Naive thymus-derived CD4-positive, alpha-beta T cell (primary cell): ENCODE measurements at regions of chr2 and their contacts with region 1.

Region 1: DNA sequence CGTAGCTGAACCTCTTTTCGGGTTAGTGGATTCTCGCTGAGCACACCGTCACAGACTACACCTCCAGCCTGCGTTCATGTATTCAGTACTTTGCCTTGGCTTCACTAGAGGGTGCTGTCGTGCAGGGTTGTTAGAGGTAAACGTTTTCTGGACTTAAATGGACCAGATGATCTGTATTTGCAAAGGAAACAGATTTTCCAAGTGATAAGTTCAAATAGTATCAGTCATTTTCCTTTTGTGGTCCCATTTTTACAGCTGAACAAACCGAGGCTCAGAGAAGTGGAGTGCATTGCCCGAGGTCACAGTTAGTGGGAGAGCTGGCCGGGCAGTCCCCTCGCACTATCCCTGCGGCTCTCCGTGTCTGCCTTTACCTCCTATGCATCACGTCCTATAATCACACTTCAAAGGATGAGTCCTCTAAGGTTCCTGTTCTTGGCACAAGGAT is 125.9 kb downstream of the MAP4K4 start:
- DNase-seq: peak; percentile 29 to 72 (median 64)
- ATAC-seq: peak; percentile 93
- H3K4me3 ChIP-seq: no peak overlapping the region
- H3K4me3 Mint-ChIP-seq: peak overlapping the region; percentile 27 to 74 (median 56)
- H3K27ac ChIP-seq: peak overlapping the region; percentile 43
- H3K27ac Mint-ChIP-seq: peak overlapping the region; percentile 70 to 95 (median 82)
- H3K4me1 ChIP-seq: peaks cover 15 to 45% of the 10 kb centered on the region in 2 donors
- H3K4me1 Mint-ChIP-seq: peaks cover 47 to 97% (median 82%) of the 10 kb centered on the region in 7 donors
- H3K27me3 ChIP-seq: no peaks in the 10 kb centered on the region
- H3K27me3 Mint-ChIP-seq: no peaks in the 10 kb centered on the region

Region 2: DNA sequence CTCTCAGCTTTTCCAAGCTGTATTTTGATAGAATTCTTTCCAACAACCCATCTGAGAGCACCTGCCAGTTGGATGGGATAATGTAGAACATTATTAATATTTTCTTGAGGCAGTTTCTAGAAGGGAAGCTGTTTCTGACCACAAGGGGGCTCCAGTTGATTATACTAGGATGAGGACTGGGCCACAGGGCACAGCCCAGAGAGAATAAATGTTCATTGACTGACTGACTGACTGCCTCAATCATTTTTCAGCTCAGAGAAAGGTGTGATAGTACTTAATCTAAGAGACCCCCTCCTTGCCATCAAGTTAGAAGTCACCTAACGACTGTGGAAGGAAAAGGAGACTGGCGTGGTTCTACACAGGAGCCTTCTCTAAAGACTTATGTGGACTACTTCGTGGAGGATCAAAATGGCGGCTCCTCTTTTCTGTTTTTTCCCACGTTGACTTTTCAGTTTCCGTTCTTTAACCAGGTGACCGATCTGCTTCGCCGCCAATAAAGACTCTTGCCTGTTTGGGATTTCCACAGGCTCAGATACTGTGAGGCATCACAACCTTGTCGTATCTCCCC is 404.2 kb before region 1 on chr2:
- CTCF ChIA-PET with region 1: interaction called, 84 read pairs
- POLR2A ChIA-PET with region 1: no interaction called
- intact Hi-C with region 1: loop called (anchors 1 to 2 kb)
- DNase-seq: peak in 8 of 9 donors; percentile 41 to 74 (median 68)
- ATAC-seq: peak; percentile 87
- H3K4me3 ChIP-seq: no peak overlapping the region
- H3K4me3 Mint-ChIP-seq: no peak overlapping the region
- H3K27ac ChIP-seq: no peak overlapping the region
- H3K27ac Mint-ChIP-seq: peak overlapping the region in 1 of 9 donors; percentile 64
- H3K4me1 ChIP-seq: no peaks in the 10 kb centered on the region
- H3K4me1 Mint-ChIP-seq: peaks cover 0 to 5% (median 0%) of the 10 kb centered on the region in 7 donors
- H3K27me3 ChIP-seq: no peaks in the 10 kb centered on the region
- H3K27me3 Mint-ChIP-seq: peaks cover 0 to 6% (median 0%) of the 10 kb centered on the region in 5 donors

Region 3: GRCh38 chr2:101655702-101656422 is 167.5 kb before region 1 on chr2:
- CTCF ChIA-PET with region 1: no interaction called
- POLR2A ChIA-PET with region 1: no interaction called
- intact Hi-C with region 1: loop called in 1 of 2 experiments (anchors 5 kb)
- DNase-seq: no peak
- ATAC-seq: no peak
- H3K4me3 ChIP-seq: no peak overlapping the region
- H3K4me3 Mint-ChIP-seq: no peak overlapping the region
- H3K27ac ChIP-seq: no peak overlapping the region
- H3K27ac Mint-ChIP-seq: no peak overlapping the region
- H3K4me1 ChIP-seq: peaks cover 5 to 10% of the 10 kb centered on the region in 2 donors
- H3K4me1 Mint-ChIP-seq: peaks cover 11 to 25% (median 16%) of the 10 kb centered on the region in 7 donors
- H3K27me3 ChIP-seq: no peaks in the 10 kb centered on the region
- H3K27me3 Mint-ChIP-seq: no peaks in the 10 kb centered on the region

Region 4: GRCh38 chr2:101717071-101717845 is 106.1 kb before region 1 on chr2:
- CTCF ChIA-PET with region 1: interaction called, 3 read pairs
- POLR2A ChIA-PET with region 1: interaction called, 3 read pairs
- intact Hi-C with region 1: loop called in 1 of 2 experiments (anchors 5 kb)
- DNase-seq: peak in 7 of 9 donors; percentile 58 to 74 (median 65)
- ATAC-seq: peak; percentile 72
- H3K4me3 ChIP-seq: peak overlapping the region; percentile 22
- H3K4me3 Mint-ChIP-seq: peak overlapping the region; percentile 39 to 83 (median 76)
- H3K27ac ChIP-seq: peak overlapping the region; percentile 64
- H3K27ac Mint-ChIP-seq: peak overlapping the region in 8 of 9 donors; percentile 76 to 98 (median 96)
- H3K4me1 ChIP-seq: peaks cover 53 to 74% of the 10 kb centered on the region in 2 donors
- H3K4me1 Mint-ChIP-seq: peaks cover 56 to 92% (median 83%) of the 10 kb centered on the region in 7 donors
- H3K27me3 ChIP-seq: no peaks in the 10 kb centered on the region
- H3K27me3 Mint-ChIP-seq: no peaks in the 10 kb centered on the region

Region 5: DNA sequence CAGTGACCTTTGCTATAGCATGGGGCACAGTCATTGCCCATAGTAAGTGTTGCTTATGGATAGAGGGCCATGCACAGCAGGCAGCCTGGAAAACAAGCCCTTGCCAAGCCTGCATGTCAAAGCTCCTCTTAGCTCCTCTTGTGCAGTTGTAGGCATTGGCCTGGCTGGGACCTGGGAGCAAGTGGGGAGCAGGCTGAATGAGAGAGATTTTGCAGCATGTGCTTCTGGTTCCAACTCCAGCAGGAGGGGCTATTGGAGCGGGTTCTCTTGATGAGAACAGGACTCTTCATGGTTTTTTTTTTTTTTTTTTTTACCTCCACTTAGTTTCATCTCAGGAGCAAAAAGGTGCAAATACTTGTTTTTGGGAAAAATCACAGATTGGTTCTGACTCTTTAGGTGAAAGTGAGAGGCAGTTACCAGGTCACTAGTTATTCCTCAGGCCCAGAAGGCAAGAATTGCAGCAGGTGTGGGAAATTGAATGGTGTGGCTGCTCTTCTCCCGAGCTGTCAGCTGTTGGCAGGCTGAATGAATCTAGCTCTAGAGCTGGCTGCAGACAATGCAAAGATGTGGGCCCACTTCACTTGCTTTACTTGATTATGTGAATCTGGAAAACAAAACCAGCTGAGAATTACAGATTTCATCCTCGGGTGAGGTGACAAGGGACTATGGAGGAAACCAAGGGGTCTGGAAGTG is 29.9 kb before region 1 on chr2:
- CTCF ChIA-PET with region 1: no interaction called
- POLR2A ChIA-PET with region 1: no interaction called
- intact Hi-C with region 1: loop called in 1 of 2 experiments (anchors 5 kb)
- DNase-seq: peak in 1 of 9 donors; percentile 6
- ATAC-seq: no peak
- H3K4me3 ChIP-seq: no peak overlapping the region
- H3K4me3 Mint-ChIP-seq: peak overlapping the region in 2 of 10 donors; percentile 34 to 38
- H3K27ac ChIP-seq: no peak overlapping the region
- H3K27ac Mint-ChIP-seq: peak overlapping the region in 7 of 9 donors; percentile 10 to 78 (median 41)
- H3K4me1 ChIP-seq: peaks cover 0 to 45% of the 10 kb centered on the region in 2 donors
- H3K4me1 Mint-ChIP-seq: peaks cover 32 to 94% (median 90%) of the 10 kb centered on the region in 7 donors
- H3K27me3 ChIP-seq: no peaks in the 10 kb centered on the region
- H3K27me3 Mint-ChIP-seq: no peaks in the 10 kb centered on the region